CD4-positive, alpha-beta T cell (primary cell): ENCODE measurements at regions of chr5 and their contacts with region 1.

Region 1: GRCh38 chr5:140690941-140691924 is at the starts of genes HARS1 and HARS2:
- DNase-seq: peak; percentile 61 to 93 (median 78)
- ATAC-seq: peak; percentile 90
- H3K4me3 ChIP-seq: peak within 1 kb of the TSS; percentile 98
- H3K4me3 Mint-ChIP-seq: peak within 1 kb of the TSS; percentile 99
- H3K27ac ChIP-seq: peak within 1 kb of the TSS; percentile 64 to 90
- H3K27ac Mint-ChIP-seq: peak within 1 kb of the TSS; percentile 97
- H3K4me1 ChIP-seq: peaks cover 28% of the 10 kb centered on the region
- H3K4me1 Mint-ChIP-seq: peaks cover 35% of the 10 kb centered on the region
- H3K27me3 ChIP-seq: no peaks in the 10 kb centered on the region
- H3K27me3 Mint-ChIP-seq: no peaks in the 10 kb centered on the region
- CTCF ChIP-seq: no peak
- total RNA-seq, gene HARS1: 53.5 to 54.1 TPM
- total RNA-seq, gene HARS2: 38.1 to 38.3 TPM

Region 2: DNA sequence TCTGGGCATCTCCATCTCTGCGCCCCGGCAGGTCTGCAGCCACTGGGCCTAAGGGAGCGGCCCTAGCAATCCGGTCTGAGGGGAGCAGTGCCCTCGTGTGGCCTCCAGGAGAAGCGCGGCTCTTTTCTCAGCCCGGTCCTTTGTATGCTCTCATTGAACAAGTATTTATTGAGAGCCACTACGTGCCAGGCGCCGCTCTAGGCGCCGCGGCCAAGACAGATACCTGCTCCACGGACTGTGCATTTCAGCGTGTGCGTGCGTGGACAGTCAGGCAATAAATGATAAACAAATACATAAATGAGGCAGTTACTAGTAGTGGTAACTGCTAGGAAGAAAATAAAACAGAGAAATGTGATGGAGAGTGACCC is 333.5 kb before region 1 on chr5:
- CTCF ChIA-PET with region 1: no interaction called
- POLR2A ChIA-PET with region 1: no interaction called
- intact Hi-C with region 1: no loop called
- DNase-seq: peak; percentile 56 to 87 (median 65)
- ATAC-seq: peak; percentile 98
- H3K4me3 ChIP-seq: peak overlapping the region; percentile 40
- H3K4me3 Mint-ChIP-seq: no peak overlapping the region
- H3K27ac ChIP-seq: no peak overlapping the region
- H3K27ac Mint-ChIP-seq: no peak overlapping the region
- H3K4me1 ChIP-seq: peaks cover 15% of the 10 kb centered on the region
- H3K4me1 Mint-ChIP-seq: peaks cover 10% of the 10 kb centered on the region
- H3K27me3 ChIP-seq: no peaks in the 10 kb centered on the region
- H3K27me3 Mint-ChIP-seq: peaks cover 4% of the 10 kb centered on the region
- CTCF ChIP-seq: peak; percentile 77

Region 3: DNA sequence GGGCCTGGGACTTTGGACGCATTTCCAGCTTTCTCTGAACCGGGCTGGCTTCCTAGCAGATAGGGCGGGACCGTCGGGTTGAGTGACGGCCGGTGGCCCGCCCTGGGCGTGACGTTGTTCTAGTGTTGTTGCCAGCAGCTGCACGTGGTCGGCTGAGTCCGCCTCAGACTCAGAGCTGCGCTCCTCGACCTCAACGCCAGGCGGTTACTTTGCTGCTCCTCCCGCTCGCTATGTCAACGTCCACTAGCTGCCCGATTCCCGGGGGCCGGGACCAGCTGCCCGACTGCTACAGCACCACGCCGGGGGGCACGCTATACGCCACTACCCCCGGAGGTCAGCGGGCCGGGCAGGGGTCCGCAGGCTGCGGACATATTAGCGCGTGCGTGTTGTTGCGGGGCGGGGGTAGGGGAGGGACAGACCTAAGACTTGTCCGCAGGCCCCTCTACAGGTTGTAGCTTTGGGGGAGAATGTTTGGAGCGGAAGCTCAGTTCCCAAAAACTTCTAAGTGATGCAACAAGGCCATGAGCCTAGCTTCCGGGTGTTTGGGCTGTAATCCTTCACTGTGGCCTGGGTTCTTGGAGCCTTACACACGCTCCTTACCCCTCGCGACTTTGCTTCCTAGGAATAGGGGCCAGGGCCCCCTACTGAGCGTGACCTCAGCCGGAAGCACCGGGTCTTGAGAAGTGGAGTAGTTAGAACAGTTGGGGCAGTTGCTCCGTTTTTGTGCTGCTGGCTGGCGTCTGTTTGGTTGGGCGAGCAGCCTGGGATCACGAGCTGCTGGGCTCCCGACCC is 143.5 kb before region 1 on chr5 and contains the start of gene EIF4EBP3:
- CTCF ChIA-PET with region 1: no interaction called
- POLR2A ChIA-PET with region 1: interaction called, 11 read pairs
- intact Hi-C with region 1: no loop called
- DNase-seq: peak; percentile 79 to 95 (median 86)
- ATAC-seq: peak; percentile 97
- H3K4me3 ChIP-seq: peak within 1 kb of the TSS; percentile 79
- H3K4me3 Mint-ChIP-seq: peak within 1 kb of the TSS; percentile 96
- H3K27ac ChIP-seq: peak within 1 kb of the TSS; percentile 88 to 89
- H3K27ac Mint-ChIP-seq: peak within 1 kb of the TSS; percentile 96
- H3K4me1 ChIP-seq: peaks cover 31% of the 10 kb centered on the region
- H3K4me1 Mint-ChIP-seq: peaks cover 38% of the 10 kb centered on the region
- H3K27me3 ChIP-seq: no peaks in the 10 kb centered on the region
- H3K27me3 Mint-ChIP-seq: no peaks in the 10 kb centered on the region
- CTCF ChIP-seq: peak; percentile 72
- total RNA-seq, gene EIF4EBP3: 12.7 to 15.1 TPM

Region 4: GRCh38 chr5:140639148-140639979 is 51.9 kb before region 1 on chr5 and contains the start of gene TMCO6:
- CTCF ChIA-PET with region 1: interaction called, 4 read pairs
- POLR2A ChIA-PET with region 1: no interaction called
- intact Hi-C with region 1: loop called in 1 of 2 experiments (anchors 5 kb)
- DNase-seq: peak; percentile 94 to 99 (median 96)
- ATAC-seq: peak; percentile 98
- H3K4me3 ChIP-seq: peak within 1 kb of the TSS; percentile 73
- H3K4me3 Mint-ChIP-seq: peak within 1 kb of the TSS; percentile 92
- H3K27ac ChIP-seq: peak within 1 kb of the TSS; percentile 77 to 94
- H3K27ac Mint-ChIP-seq: peak within 1 kb of the TSS; percentile 93
- H3K4me1 ChIP-seq: peaks cover 28% of the 10 kb centered on the region
- H3K4me1 Mint-ChIP-seq: peaks cover 34% of the 10 kb centered on the region
- H3K27me3 ChIP-seq: no peaks in the 10 kb centered on the region
- H3K27me3 Mint-ChIP-seq: no peaks in the 10 kb centered on the region
- CTCF ChIP-seq: peak; percentile 76
- total RNA-seq, gene TMCO6: 20.9 to 21.1 TPM

Region 5: DNA sequence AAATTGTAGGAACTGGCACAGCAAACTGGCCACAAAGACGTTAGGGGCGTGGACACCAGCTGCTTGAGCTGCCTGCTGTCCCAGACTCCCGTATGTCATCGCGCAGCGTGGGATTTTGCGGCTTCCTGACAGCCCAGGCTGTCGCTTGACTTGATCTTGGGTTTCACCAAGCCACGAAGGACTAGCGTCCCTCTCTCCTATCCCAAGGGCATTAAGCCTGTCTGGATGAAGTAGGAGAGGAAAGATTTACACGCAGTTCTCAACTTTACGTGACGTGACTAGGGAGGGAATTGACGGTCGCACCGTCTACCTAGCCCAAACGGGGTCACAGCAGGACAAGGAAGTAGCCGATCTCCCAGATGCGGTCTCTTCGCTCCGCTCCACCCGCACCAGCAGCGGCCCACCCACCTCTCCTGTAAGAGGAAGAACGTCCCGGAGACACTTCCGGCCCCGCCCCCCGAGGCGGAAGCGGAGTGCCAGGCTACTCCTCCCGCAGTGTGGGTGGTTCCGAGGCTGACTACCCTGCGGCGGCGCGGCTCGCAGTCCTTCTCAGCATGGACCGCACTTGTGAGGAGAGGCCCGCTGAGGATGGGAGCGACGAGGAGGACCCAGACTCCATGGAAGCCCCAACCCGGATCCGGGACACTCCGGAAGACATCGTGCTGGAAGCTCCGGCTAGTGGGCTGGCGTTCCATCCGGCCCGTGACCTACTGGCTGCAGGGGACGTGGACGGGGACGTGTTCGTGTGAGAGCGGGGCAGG is 26.7 kb before region 1 on chr5 and contains the start of gene WDR55:
- CTCF ChIA-PET with region 1: no interaction called
- POLR2A ChIA-PET with region 1: interaction called, 13 read pairs
- intact Hi-C with region 1: loop called (anchors 1 to 2 kb)
- DNase-seq: peak; percentile 90 to 98 (median 95)
- ATAC-seq: peak; percentile 92
- H3K4me3 ChIP-seq: peak within 1 kb of the TSS; percentile 98
- H3K4me3 Mint-ChIP-seq: peak within 1 kb of the TSS; percentile 91
- H3K27ac ChIP-seq: peak within 1 kb of the TSS; percentile 87 to 93
- H3K27ac Mint-ChIP-seq: peak within 1 kb of the TSS; percentile 98
- H3K4me1 ChIP-seq: peaks cover 26% of the 10 kb centered on the region
- H3K4me1 Mint-ChIP-seq: peaks cover 45% of the 10 kb centered on the region
- H3K27me3 ChIP-seq: no peaks in the 10 kb centered on the region
- H3K27me3 Mint-ChIP-seq: no peaks in the 10 kb centered on the region
- CTCF ChIP-seq: no peak
- total RNA-seq, gene WDR55: 40.1 to 42.9 TPM

Region 6: GRCh38 chr5:140741967-140742366 is 50.7 kb after region 1 on chr5:
- CTCF ChIA-PET with region 1: no interaction called
- POLR2A ChIA-PET with region 1: no interaction called
- intact Hi-C with region 1: no loop called
- DNase-seq: no peak
- ATAC-seq: no peak
- H3K4me3 ChIP-seq: no peak overlapping the region
- H3K4me3 Mint-ChIP-seq: no peak overlapping the region
- H3K27ac ChIP-seq: no peak overlapping the region
- H3K27ac Mint-ChIP-seq: no peak overlapping the region
- H3K4me1 ChIP-seq: no peaks in the 10 kb centered on the region
- H3K4me1 Mint-ChIP-seq: no peaks in the 10 kb centered on the region
- H3K27me3 ChIP-seq: peaks cover 4 to 6% of the 10 kb centered on the region in 2 experiments
- H3K27me3 Mint-ChIP-seq: peaks cover 22% of the 10 kb centered on the region
- CTCF ChIP-seq: no peak